GM10248 (cell line): ENCODE measurements at regions of chr20 and their contacts with region 1.

Region 1: GRCh38 chr20:34876162-34877001 is at the start of gene ACSS2:
- DNase-seq: peak; percentile 93
- CTCF ChIP-seq: no peak

Region 2: DNA sequence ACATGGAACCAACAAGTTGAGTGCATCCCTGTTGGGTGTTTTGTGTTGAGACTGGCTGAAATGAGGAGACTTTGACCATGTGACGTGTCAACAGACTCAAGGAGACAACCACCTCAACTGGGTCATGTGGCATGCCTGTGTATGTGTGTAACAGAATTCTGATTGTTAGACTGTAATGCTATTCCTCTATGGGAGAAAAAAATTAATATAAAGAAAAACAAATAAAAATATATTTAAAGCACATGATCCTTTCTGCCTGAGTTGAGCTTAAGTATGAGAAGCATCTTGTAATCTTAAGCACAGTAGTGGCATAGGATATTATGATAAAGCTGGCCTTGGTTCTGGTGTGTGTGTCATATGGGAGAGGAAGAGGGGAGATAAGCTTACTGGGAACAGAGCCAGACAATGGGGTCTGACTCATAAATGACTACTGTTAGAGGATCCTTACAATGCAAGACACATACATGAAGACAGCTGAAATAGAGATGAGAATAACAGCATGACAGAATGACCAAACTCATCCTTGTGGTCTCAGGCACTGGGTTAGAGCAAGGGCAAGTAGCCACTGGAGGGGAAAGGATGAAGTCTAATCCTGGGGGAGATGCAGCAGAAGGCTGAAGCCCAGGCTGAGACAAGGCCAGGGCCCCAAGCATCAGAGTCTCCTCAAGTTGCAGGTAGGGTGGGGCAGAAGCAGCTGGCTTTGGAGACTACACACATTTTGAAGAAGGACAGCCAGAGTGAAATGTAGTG is 163.0 kb before region 1 on chr20:
- CTCF ChIA-PET with region 1: no interaction called
- POLR2A ChIA-PET with region 1: no interaction called
- DNase-seq: no peak
- CTCF ChIP-seq: no peak

Region 3: GRCh38 chr20:34891166-34892062 is 15.0 kb after region 1 on chr20:
- CTCF ChIA-PET with region 1: interaction called, 14 read pairs
- POLR2A ChIA-PET with region 1: no interaction called
- DNase-seq: no peak
- CTCF ChIP-seq: no peak

Region 4: DNA sequence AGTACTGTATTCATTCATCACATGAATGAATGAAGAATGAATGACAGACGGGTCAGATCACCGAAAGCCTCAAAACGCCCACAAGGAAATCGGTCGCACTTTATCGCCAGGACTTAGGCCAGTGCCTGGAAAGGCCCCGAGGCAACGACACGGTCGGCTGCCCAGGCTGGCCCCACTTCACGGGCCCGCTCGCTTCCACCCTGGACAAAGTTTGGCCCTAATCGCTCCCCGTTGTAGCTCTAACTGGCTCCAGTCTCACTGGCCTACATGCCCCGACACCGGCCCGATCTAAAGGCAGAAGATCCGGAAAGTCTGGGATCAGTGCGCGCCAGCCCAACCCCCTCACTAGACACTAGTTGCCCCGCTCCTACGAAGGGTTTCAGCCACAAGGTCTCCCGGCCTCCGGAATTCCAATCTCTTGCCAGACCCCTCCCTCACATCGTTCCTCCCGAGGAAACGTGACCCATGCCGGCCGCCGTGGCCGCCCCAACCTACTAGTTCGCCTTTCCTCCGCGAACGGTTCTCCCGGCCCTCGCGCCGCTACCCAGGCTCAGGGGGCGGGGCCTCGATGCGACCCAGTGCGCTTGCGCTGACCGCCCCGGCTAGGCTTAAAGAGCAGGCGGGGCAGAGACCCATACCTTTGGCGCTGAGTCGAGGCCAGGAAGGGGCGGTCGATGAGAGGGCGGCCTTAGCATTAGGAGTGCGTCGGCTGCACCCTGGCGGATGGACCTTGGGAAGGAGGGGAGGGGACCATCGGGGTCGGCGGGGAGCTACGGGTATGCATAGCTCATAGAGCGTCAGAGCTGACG is 79.1 kb after region 1 on chr20 and contains the starts of genes GSS and MYH7B:
- CTCF ChIA-PET with region 1: interaction called, 55 read pairs
- POLR2A ChIA-PET with region 1: interaction called, 4 read pairs
- DNase-seq: peak; percentile 97
- CTCF ChIP-seq: peak; percentile 50

Region 5: DNA sequence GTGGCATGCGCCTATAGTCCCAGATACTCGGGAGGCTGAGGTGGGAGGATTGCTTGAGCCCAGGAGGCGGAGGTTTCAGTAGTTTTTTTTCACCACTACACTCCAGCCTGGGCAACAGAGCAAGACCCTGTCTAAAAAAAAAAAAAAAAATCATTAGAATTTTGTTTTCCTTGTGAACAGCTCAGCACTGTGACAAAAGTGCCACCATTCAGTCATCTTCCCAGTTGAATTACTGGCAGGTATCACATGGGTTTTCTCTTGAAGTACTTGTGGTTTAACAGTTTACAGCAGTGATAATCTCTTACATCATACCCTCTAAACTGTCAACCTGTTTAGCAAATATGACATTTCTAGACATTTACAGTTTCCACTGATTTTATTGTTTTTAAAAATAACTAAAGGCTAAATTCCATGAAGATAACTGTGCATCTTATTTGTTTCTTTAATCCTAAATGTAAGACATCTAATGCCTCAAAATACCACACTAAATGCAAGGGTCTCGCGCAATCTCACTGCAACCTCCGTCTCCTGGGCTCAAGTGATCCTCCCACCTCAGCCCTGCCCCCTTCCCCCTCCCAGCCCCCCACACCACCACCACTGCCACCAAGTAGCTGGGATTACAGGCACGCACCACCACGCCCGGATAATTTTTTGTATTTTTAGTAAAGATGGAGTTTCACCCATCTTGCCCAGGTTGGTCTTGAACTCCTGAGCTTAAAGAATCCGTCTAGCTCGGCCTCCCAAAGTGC is 209.3 kb after region 1 on chr20:
- CTCF ChIA-PET with region 1: interaction called, 15 read pairs
- POLR2A ChIA-PET with region 1: no interaction called
- DNase-seq: no peak
- CTCF ChIP-seq: no peak

Region 6: DNA sequence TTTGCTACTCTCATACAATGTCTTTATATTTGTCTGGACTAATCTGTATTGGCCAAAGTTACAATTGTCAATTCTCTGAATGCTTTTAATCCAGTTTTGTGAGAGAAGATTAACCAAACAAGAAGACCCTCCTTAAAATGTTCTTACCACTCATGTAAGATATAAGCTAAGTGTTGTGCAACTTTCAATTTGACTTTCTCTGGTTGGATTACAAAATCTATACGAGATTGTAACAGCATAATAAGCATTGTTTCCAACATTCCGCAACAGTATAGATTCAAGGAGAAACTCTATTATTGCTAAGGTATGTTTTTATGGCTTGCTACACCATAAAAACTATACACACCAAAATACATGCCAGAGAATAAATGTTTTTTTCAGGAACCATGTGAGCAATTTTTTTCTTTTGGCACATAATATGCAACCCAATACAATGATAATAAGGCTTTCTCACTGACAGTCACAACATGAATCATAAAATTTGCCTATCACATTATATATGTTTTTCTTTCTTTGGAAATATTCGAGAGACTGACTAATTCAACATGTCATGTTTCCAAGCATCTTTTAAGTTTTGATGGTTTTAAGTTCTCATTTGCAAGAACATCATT is 228.4 kb after region 1 on chr20:
- CTCF ChIA-PET with region 1: no interaction called
- POLR2A ChIA-PET with region 1: no interaction called
- DNase-seq: no peak
- CTCF ChIP-seq: no peak